Thyroid gland (tissue), 4 donors: ENCODE measurements at regions of chr7 and their contacts with region 1.

Region 1: GRCh38 chr7:47435889-47436312 is 146.0 kb downstream of the TNS3 start:
- DNase-seq: peak; percentile 75 to 81
- H3K4me3 ChIP-seq: no peak overlapping the region
- H3K27ac ChIP-seq: no peak overlapping the region
- H3K4me1 ChIP-seq: no peaks in the 10 kb centered on the region
- H3K27me3 ChIP-seq: no peaks in the 10 kb centered on the region
- CTCF ChIP-seq: peak; percentile 21 to 81 (median 72)
- POLR2A ChIP-seq: no peak

Region 2: GRCh38 chr7:47266131-47266706 is 169.7 kb before region 1 on chr7:
- intact Hi-C with region 1: loop called (anchors 10 kb)
- DNase-seq: peak; percentile 54 to 65
- H3K4me3 ChIP-seq: no peak overlapping the region
- H3K27ac ChIP-seq: peak overlapping the region in 1 of 3 donors; percentile 42
- H3K4me1 ChIP-seq: peaks cover 0 to 6% of the 10 kb centered on the region in 2 donors
- H3K27me3 ChIP-seq: no peaks in the 10 kb centered on the region
- CTCF ChIP-seq: peak; percentile 88 to 97 (median 94)
- POLR2A ChIP-seq: no peak